PC-3 (cell line): ENCODE measurements at regions of chr7 and their contacts with region 1.

Region 1: DNA sequence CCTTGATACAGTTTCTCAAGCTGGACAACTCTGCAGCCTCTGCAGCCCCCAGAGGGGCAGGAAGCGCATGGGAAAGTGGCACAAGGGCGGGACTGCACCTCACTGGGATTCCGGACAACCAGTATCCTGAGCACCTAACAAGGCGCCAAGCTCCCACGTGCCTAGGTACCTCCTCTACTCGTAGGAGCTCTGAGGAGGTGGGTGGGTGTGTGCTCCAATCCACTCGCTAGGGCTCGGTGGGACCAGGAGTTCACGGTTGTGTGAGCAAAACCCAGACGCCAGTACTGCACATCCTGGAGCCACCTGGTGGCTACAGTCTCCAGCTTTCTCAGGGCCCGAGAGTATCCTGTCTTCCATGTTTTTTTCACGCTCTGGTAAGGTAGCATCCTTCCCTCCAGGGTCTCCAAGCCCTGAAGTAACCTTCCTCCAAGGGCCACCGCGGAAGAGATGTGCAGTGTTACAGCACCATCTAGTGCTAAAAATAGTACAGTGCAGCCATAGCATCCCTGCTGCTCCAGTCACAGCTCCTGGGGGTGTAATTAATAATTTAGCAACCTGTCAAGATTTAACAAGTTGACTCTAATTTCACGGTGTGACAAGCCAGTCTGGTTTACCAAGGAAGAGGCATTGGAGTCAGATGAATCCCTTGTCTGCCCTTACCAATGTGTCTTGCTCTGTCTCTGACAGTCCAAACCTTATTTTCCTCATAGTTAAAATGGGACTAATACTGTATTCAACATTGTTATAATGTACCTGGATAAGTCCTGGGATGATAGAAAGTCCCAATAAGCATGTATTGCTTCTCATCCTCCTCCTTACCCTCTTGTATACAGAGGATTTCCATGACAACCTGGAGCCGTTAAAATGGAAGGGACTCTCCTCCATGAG is 70.4 kb downstream of the HERPUD2 start:
- DNase-seq: peak; percentile 56
- ATAC-seq: peak; percentile 73
- H3K4me3 ChIP-seq: no peak overlapping the region
- H3K27ac ChIP-seq: no peak overlapping the region
- H3K4me1 ChIP-seq: no peaks in the 10 kb centered on the region
- H3K27me3 ChIP-seq: no peaks in the 10 kb centered on the region
- CTCF ChIP-seq: peak; percentile 87

Region 2: GRCh38 chr7:35450456-35451214 is 173.9 kb before region 1 on chr7:
- CTCF ChIA-PET with region 1: no interaction called
- POLR2A ChIA-PET with region 1: no interaction called
- intact Hi-C with region 1: no loop called
- DNase-seq: no peak
- ATAC-seq: no peak
- H3K4me3 ChIP-seq: no peak overlapping the region
- H3K27ac ChIP-seq: no peak overlapping the region
- H3K4me1 ChIP-seq: no peaks in the 10 kb centered on the region
- H3K27me3 ChIP-seq: peaks cover 35% of the 10 kb centered on the region
- CTCF ChIP-seq: no peak

Region 3: DNA sequence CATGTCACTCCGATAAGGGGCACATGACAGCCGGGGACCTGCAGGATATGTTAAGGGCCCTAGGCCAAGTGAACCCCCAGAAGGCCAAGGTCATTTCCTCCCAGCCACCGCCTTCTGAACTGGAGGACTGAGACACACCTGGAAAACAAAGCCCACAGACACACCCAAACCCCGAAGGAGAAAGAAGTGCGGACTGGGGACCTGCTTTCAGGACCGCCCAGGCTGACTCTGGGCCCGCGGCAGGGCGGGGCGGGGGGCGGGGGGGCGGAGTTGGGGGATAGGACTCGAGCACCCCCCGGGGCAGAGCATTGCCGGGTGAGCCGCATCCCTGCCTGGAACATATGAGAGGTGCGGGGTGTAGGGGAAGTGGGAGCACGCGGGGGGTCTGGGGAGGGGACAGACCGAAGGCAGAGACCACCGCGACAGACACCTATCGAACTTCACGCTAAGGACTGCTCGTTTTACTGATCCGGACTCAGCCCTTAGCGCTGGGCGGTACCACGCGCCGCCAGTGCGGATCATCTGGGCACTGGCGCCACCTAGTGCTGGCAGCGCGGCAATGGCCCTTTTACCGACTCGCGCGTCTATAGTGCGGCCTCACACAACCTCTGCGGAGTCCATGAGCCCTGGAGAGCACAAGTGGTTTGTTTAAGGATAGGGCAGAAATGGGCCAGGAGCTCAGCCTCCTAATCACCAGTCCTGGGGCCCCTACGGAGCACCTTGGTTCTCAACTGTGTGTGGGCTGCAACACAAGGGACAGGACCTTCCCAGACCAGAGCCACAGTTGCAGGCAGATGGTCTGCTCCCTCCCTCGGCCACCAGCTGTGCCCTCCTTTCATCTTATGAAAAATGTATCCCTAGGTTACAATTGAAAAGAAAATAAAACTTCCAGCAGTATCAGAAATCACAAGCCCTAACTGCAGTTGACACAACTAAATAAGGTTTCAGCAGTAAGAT is 87.2 kb before region 1 on chr7:
- CTCF ChIA-PET with region 1: no interaction called
- POLR2A ChIA-PET with region 1: no interaction called
- intact Hi-C with region 1: loop called (anchors 5 kb)
- DNase-seq: peak; percentile 80
- ATAC-seq: peak; percentile 98
- H3K4me3 ChIP-seq: peak overlapping the region; percentile 53; the same call in 1 of the 2 replicates
- H3K27ac ChIP-seq: no peak overlapping the region
- H3K4me1 ChIP-seq: peaks cover 8% of the 10 kb centered on the region; the same call in 1 of the 2 replicates
- H3K27me3 ChIP-seq: peaks cover 12% of the 10 kb centered on the region; the same call in 1 of the 2 replicates
- CTCF ChIP-seq: peak; percentile 85

Region 4: DNA sequence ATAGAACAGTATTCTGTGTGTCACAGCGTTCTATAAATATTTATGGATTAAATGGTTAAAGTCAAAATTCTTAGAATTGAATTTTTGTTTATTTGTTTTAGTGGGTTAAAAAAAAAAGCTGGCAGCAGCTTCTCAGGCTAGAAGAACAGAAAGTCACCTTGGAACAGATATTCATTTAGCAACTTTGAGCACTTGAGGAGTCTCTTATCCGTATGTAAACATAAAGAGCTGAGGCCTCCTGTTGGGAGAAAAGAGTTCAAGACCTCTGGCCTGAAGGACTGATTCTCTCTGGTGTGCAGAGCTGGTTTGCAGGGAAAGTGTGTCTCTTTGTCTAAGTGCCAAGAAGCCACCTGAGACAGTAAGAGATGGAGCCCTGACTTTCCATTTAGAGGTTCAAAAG is 39.6 kb before region 1 on chr7:
- CTCF ChIA-PET with region 1: no interaction called
- POLR2A ChIA-PET with region 1: interaction called, 14 read pairs
- intact Hi-C with region 1: no loop called
- DNase-seq: no peak
- ATAC-seq: no peak
- H3K4me3 ChIP-seq: no peak overlapping the region
- H3K27ac ChIP-seq: no peak overlapping the region
- H3K4me1 ChIP-seq: no peaks in the 10 kb centered on the region
- H3K27me3 ChIP-seq: no peaks in the 10 kb centered on the region
- CTCF ChIP-seq: no peak

Region 5: DNA sequence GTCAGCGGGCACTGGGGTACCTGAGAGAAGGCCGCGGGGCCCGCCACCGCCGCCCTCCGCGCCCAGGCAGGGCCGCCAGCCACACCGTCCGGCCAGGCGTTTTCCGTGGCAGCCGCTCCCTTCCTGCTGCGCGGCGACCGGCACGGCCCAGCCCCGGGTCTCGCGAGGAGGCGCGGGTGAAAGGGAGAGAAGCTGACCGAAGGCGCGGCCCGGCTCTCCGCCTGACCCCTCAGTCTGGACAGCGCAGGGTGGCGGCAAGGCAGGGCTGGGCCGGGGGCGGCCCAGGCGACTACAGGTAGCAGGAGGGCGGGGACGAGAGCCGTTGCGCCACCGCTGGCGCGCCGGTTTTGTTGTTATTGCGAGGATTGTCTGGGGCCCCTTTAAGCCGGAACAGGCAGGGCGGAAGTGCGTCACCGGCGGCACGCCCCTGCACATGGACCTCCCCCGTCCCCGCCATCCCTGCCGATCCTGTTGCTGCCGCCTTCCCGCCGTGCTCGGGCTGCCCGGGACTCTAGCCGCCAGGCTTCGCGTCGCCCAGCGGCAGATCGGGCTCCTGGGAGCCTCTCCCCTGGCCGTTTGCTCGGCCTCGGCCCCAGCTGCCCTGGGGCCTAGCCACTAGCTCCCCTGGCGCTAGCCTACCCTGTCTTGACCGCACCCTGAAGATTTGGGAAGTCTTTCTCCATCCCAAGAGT is 70.4 kb after region 1 on chr7 and contains the start of gene HERPUD2:
- CTCF ChIA-PET with region 1: no interaction called
- POLR2A ChIA-PET with region 1: no interaction called
- intact Hi-C with region 1: no loop called
- DNase-seq: peak; percentile 91
- ATAC-seq: peak; percentile 83
- H3K4me3 ChIP-seq: peak within 1 kb of the TSS; percentile 99
- H3K27ac ChIP-seq: peak within 1 kb of the TSS; percentile 90
- H3K4me1 ChIP-seq: peaks cover 49% of the 10 kb centered on the region
- H3K27me3 ChIP-seq: no peaks in the 10 kb centered on the region
- CTCF ChIP-seq: no peak
- total RNA-seq, gene HERPUD2: 11.5 and 11.7 TPM in 2 replicates

Region 6: GRCh38 chr7:35906191-35906908 is 281.8 kb after region 1 on chr7:
- CTCF ChIA-PET with region 1: no interaction called
- POLR2A ChIA-PET with region 1: no interaction called
- intact Hi-C with region 1: no loop called
- DNase-seq: peak; percentile 81
- ATAC-seq: peak; percentile 91
- H3K4me3 ChIP-seq: no peak overlapping the region
- H3K27ac ChIP-seq: no peak overlapping the region
- H3K4me1 ChIP-seq: no peaks in the 10 kb centered on the region
- H3K27me3 ChIP-seq: no peaks in the 10 kb centered on the region
- CTCF ChIP-seq: peak; percentile 88